Heart right ventricle (tissue), 16 donors: ENCODE measurements at regions of chr7 and their contacts with region 1.

Region 1: GRCh38 chr7:116786791-116787443 is 75.5 kb upstream of the CAPZA2 start:
- DNase-seq: peak in 1 of 2 donors; percentile 19
- ATAC-seq: peak in 2 of 8 donors; percentile 50 to 51
- H3K4me3 ChIP-seq: no peak overlapping the region
- H3K27ac ChIP-seq: no peak overlapping the region
- H3K4me1 ChIP-seq: peaks cover 0 to 8% (median 0%) of the 10 kb centered on the region in 9 donors
- H3K27me3 ChIP-seq: no peaks in the 10 kb centered on the region
- CTCF ChIP-seq: peak in 7 of 9 donors; percentile 20 to 56 (median 44)

Region 2: DNA sequence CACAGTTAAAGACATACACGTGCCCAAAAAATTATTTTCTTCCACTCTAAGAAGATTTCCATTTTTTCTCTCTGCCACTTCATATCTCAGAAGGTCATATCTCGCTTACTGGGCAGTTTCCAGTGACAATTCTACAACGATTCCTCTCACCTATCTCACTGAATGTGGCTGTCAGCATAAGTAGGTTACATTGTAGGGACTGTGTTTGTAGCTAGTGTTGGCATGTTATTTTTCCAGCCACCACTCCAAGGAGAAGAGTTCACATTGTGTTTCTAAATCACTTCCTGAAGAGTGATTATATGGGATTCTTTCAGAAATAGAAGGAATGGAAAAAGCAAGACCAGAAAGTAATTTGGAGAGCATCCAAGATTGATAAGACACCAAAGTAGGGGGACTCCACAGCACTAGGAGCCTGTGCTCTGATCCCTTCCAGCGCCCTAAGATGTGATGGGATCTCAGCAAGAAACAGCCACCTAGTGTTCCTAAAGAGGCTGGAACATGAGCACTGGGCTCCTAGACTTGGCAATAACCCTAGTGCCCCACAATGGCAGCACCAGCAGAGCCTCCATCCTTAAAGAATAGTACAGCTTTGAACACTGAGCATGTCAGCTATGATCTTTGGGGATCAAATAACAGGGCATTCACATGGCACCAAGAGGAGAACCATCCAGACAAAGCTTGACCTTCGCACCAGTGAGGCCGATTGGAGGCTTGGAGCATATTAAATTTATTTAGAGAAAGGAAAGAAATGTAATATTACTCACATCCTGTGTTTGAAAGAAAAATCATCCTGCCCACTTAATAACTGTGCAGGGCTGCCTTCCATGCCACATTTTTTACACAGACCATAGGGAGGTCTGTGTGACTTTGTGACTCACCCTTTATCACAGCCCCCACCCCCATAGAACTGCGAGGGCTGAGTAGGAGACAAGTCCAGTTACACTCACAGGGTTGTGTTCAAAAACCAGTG is 210.3 kb before region 1 on chr7:
- intact Hi-C with region 1: no loop called
- DNase-seq: no peak
- ATAC-seq: peak; percentile 31 to 84 (median 61)
- H3K4me3 ChIP-seq: no peak overlapping the region
- H3K27ac ChIP-seq: peak overlapping the region; percentile 8 to 81 (median 52)
- H3K4me1 ChIP-seq: peaks cover 0 to 62% (median 41%) of the 10 kb centered on the region in 9 donors
- H3K27me3 ChIP-seq: no peaks in the 10 kb centered on the region
- CTCF ChIP-seq: peak in 1 of 9 donors; percentile 7

Region 3: DNA sequence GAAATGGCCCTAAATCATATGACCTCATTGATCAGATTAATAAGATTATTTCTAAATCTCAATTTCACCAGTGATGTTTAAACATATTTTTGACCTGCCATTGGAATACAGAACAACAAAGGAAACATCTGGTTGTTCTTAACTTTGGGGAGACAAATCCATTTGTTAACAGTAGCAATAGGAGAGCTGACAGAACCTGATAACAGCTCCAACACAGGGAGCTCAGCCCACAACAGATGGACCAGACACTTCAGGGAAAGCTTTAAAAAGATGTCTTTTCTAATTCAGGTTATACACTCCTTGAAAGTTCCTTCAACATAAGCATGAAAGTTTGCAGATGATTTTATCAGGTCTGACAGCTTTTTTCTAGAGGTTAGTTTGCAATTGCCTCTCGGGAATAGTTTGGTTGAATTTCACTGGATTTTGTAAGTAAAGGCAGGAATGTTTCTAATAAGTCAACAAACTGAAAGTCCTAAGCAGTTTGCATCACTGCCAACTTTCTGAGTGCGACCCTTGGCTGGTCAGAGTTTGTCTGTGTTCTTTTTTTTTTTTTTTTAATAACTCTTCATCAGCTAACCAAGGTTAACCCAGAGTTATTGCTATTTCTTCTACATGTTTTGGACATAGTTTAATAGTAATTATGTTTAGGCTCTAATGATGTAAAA is 121.5 kb before region 1 on chr7:
- intact Hi-C with region 1: loop called in 2 of 10 experiments (anchors 10 kb)
- DNase-seq: no peak
- ATAC-seq: no peak
- H3K4me3 ChIP-seq: no peak overlapping the region
- H3K27ac ChIP-seq: no peak overlapping the region
- H3K4me1 ChIP-seq: peaks cover 0 to 17% (median 0%) of the 10 kb centered on the region in 9 donors
- H3K27me3 ChIP-seq: peaks cover 0 to 30% (median 0%) of the 10 kb centered on the region in 7 donors
- CTCF ChIP-seq: no peak

Region 4: DNA sequence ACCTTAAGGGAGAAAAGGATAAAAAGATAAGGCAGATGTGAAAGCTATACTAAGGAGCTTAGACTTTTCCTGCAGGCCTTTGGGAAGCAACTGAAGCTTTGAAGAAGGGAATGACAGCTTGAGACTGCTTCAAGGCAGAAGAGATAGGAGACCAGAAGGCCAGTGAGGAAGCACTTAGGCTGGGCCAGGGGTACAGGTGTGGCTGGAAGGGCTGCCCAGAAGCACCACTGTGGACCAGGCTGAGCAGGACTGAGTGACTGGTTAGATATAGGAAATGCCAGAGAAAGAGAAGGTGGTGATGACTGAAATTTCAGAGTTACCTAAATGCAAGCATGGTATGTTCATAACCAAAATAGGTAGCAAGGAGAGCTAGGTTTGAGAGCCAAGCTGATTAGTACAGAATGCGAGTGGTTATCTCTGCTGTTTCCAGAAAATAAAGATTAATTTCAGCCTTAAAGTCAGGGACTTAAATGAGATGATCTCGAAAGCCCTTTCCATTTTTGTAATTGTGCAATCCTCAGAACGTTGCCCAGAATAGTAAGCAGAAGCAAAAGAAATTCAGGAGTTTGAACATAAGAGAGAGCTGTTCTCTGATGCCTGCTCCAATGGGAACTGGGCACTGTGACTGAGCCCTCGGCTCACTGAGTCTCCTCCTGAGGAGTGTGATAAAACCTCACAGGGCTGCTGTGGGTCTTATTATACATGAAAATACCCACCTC is 60.0 kb before region 1 on chr7:
- intact Hi-C with region 1: loop called in 1 of 10 experiments (anchors 10 kb)
- DNase-seq: no peak
- ATAC-seq: peak in 4 of 8 donors; percentile 35 to 46 (median 41)
- H3K4me3 ChIP-seq: no peak overlapping the region
- H3K27ac ChIP-seq: peak overlapping the region in 1 of 10 donors; percentile 10
- H3K4me1 ChIP-seq: peaks cover 0 to 19% (median 14%) of the 10 kb centered on the region in 9 donors
- H3K27me3 ChIP-seq: no peaks in the 10 kb centered on the region
- CTCF ChIP-seq: no peak

Region 5: GRCh38 chr7:116834815-116835533 is 48.1 kb after region 1 on chr7:
- intact Hi-C with region 1: no loop called
- DNase-seq: peak in 1 of 2 donors; percentile 28
- ATAC-seq: peak in 6 of 8 donors; percentile 42 to 77 (median 60)
- H3K4me3 ChIP-seq: no peak overlapping the region
- H3K27ac ChIP-seq: no peak overlapping the region
- H3K4me1 ChIP-seq: peaks cover 0 to 10% (median 0%) of the 10 kb centered on the region in 9 donors
- H3K27me3 ChIP-seq: peaks cover 0 to 4% (median 0%) of the 10 kb centered on the region in 7 donors
- CTCF ChIP-seq: no peak